Thyroid gland (tissue), 4 donors: ENCODE measurements at regions of chr3 and their contacts with region 1.

Region 1: DNA sequence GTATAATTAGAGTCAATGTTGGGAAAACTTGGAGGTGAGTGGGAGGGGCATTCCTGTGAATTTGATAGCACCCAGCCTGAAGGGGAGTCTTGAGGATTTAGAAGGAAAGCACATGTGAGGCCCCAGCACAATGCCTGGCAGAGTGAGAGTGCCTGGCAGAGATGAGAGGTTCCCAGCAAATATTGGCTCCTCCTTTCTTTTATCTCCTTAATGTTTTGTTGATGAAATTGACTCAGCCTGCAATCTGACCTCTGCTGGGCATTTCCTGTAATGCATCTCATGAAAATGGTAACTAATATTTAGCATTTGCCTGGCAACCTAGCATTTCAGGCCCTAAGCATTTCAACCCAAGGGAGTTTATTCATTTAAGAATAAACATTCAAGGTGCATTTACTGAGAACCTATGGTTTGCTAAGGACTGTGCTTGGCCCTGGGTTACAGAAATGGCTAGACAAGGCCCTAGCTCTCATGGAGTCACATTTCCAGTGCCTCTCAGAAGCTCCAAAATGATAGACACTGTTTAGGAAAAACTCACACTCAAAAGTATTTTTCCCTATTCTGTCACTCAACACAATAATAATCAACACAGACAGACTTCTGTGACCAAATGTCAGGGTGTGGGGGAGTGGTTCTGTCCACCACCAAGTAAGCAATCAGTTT is 19.0 kb downstream of the PDHB start:
- DNase-seq: peak; percentile 64 to 66
- H3K4me3 ChIP-seq: no peak overlapping the region
- H3K27ac ChIP-seq: no peak overlapping the region
- H3K4me1 ChIP-seq: peaks cover 3 to 8% of the 10 kb centered on the region in 2 donors
- H3K27me3 ChIP-seq: no peaks in the 10 kb centered on the region
- CTCF ChIP-seq: peak; percentile 54 to 93 (median 84)
- POLR2A ChIP-seq: no peak

Region 2: DNA sequence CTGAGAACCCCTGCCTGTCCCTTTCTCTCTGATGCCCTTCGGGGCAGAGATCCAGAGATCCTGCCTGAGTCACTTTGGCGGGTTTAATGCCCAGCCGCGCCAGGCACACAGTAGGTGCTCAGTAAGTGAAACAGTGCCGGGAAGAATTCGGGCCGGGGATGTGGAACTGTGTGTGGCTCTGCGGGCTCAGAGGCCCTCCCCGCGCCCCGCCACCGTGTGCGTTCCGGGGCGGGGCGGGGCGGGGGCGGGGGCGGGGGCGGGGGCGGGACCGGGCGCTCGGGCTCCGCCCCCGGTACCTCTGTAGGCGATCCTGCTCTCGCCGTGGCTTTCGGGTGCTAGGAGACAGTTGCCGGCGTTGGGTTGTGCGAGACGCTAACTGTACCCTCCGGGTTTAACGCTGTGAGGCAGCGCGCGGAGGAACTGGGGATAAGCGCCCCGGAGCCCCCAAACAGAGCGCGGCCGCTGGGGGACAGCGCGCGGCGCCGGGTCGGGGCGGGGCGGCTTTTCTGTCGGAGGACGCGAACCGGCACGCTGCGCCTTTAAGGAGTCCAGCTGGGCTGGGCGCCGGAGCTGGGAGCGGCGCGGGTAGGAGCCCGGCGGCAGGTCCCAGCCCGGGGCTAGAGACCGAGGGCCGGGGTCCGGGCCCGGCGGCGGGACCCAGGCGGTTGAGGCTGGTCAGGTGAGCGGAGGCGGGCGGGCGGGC is 177.3 kb before region 1 on chr3 and contains the start of gene ABHD6:
- intact Hi-C with region 1: no loop called
- DNase-seq: peak; percentile 73 to 74
- H3K4me3 ChIP-seq: peak within 1 kb of the TSS; percentile 77 to 92 (median 84)
- H3K27ac ChIP-seq: peak within 1 kb of the TSS in 2 of 3 donors; percentile 70 to 73
- H3K4me1 ChIP-seq: peaks cover 0 to 18% of the 10 kb centered on the region in 2 donors
- H3K27me3 ChIP-seq: no peaks in the 10 kb centered on the region
- CTCF ChIP-seq: peak in 3 of 6 experiments; percentile 18 to 66 (median 25)
- POLR2A ChIP-seq: peak in 1 of 2 donors; percentile 39
- total RNA-seq, gene ABHD6: 14.7 to 28.6 (median 18.0) TPM

Region 3: DNA sequence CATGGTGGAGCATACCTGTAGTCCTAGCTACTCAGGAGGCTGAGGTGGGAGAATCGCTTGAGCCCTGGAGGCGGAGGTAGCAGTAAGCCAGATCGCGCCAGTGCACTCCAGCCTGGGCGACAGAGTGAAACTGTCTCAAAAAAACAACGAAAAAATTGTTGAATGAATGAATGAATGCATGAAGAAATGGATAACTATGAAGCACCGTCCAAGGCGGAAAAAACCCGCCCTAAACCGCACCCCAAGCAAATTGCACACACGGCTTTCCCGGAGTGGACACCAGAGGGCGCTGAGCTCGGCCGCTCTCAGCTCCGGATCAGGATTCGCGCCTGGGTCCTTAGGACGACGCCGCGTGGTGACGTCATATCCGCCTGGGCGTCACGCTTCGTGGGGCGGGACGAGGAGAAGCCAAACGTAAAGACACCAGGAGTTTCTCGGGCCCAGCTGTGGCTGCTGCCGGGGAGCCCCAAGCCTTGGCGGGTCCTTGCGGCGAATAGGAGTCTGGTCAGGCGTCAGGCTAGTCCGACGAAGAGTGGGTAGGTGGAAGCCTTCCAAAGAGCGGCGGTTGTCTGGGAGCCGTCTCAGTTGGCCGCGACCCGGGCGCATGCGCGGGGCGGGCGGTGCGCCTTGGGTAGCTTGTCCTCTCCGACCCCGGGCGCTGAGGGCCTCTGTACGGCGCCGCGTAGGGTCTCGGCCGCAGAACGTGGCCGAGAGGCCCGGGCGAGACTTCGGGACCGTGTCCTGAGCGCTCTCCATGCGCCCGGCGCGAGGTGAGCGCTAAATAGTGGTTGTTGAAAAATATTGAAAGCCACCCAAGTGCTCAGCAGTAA is 108.6 kb before region 1 on chr3 and contains the starts of genes HTD2 and RPP14:
- intact Hi-C with region 1: loop called (anchors 5 kb)
- DNase-seq: peak; percentile 97 to 98
- H3K4me3 ChIP-seq: peak within 1 kb of the TSS; percentile 41 to 78 (median 62)
- H3K27ac ChIP-seq: peak within 1 kb of the TSS; percentile 94 to 97 (median 96)
- H3K4me1 ChIP-seq: peaks cover 15 to 21% of the 10 kb centered on the region in 2 donors
- H3K27me3 ChIP-seq: no peaks in the 10 kb centered on the region
- CTCF ChIP-seq: peak; percentile 90 to 97 (median 95)
- POLR2A ChIP-seq: peak; percentile 44 to 76
- total RNA-seq, gene HTD2: 8.4 to 19.8 (median 18.6) TPM
- total RNA-seq, gene RPP14: 13.4 to 19.9 (median 15.7) TPM

Region 4: GRCh38 chr3:58324391-58325390 is 90.0 kb before region 1 on chr3:
- intact Hi-C with region 1: loop called (anchors 5 kb)
- DNase-seq: no peak
- H3K4me3 ChIP-seq: no peak overlapping the region
- H3K27ac ChIP-seq: peak overlapping the region; percentile 75 to 85 (median 81)
- H3K4me1 ChIP-seq: peaks cover 39 to 43% of the 10 kb centered on the region in 2 donors
- H3K27me3 ChIP-seq: no peaks in the 10 kb centered on the region
- CTCF ChIP-seq: no peak
- POLR2A ChIP-seq: no peak